MCF 10A (cell line): ENCODE measurements at regions of chr1 and their contacts with region 1.

Region 1: GRCh38 chr1:6359216-6360116 is 34.1 kb downstream of the ACOT7 start:
- DNase-seq: peak; percentile 39
- H3K4me3 Mint-ChIP-seq: no peak overlapping the region
- H3K27ac Mint-ChIP-seq: no peak overlapping the region
- H3K4me1 Mint-ChIP-seq: peaks cover 18% of the 10 kb centered on the region
- H3K27me3 Mint-ChIP-seq: no peaks in the 10 kb centered on the region
- CTCF ChIP-seq: no peak

Region 2: DNA sequence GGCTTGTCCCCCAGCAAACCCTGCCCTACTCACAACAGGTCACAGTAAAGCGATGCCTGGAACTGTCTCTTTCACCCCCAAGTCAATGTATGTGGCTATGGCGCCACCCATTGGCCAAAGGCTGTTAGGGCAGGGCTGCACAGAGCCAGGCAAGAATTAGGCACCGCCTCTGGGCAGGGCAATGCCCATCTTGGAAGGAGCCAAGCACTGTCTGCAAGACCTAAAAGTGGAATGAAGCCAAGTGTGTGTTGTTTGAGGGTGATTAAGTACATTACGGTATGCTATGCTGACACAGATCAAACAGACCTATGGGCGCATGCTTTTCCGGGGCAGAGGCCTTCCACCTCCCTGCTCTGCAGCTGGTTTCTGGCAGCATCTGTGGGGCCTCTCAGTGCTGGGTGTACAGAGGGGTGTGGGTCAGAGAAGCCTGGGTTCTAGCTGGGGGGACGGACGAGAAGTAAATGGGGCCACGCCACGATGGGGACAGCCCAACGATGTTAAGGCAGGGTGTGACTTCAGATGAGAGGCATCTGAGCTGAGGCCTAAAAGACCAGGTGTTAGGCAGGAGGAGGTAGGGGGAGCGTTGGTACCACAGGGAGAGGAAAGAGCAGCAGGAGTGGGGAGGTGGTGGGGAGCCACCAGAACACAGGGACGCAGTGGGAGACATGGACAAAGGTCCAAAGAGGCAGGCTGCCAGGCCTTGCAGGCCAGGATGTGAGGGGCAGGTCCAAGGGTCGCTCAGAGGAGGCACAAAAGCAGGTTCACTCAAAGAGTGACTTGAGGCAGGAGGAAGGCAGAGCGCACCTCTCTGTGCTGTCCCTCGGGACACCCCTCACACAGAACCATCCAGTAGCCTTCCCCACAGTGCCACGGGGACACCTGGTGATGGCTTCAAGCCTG is 15.7 kb before region 1 on chr1:
- CTCF ChIA-PET with region 1: interaction called, 19 read pairs
- POLR2A ChIA-PET with region 1: no interaction called
- intact Hi-C with region 1: no loop called
- DNase-seq: peak; percentile 98
- H3K4me3 Mint-ChIP-seq: no peak overlapping the region
- H3K27ac Mint-ChIP-seq: peak overlapping the region; percentile 68
- H3K4me1 Mint-ChIP-seq: peaks cover 15% of the 10 kb centered on the region
- H3K27me3 Mint-ChIP-seq: no peaks in the 10 kb centered on the region
- CTCF ChIP-seq: peak; percentile 93

Region 3: GRCh38 chr1:6385488-6386191 is 26.2 kb after region 1 on chr1:
- CTCF ChIA-PET with region 1: interaction called, 75 read pairs
- POLR2A ChIA-PET with region 1: interaction called, 8 read pairs
- intact Hi-C with region 1: loop called (anchors 1 kb)
- DNase-seq: peak; percentile 97
- H3K4me3 Mint-ChIP-seq: peak overlapping the region; percentile 89
- H3K27ac Mint-ChIP-seq: peak overlapping the region; percentile 81
- H3K4me1 Mint-ChIP-seq: peaks cover 25% of the 10 kb centered on the region
- H3K27me3 Mint-ChIP-seq: no peaks in the 10 kb centered on the region
- CTCF ChIP-seq: no peak

Region 4: DNA sequence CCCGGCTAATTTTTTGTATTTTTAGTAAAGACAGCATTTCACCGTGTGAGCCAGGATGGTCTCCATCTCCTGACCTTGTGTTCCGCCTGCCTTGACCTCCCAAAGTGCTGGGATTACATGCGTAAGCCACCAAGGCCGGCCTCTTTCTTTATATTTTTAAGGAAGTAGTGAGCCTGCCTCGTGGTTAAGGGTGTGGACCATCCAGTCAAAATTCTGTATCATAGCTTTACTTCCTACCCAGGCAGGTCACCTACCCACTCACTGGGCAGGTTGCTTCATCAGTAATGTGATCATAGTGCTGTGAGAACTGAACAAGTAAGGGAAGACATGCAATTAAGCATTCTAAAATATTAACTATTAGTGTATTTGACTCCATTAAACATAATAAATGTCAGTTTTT is 42.2 kb after region 1 on chr1:
- CTCF ChIA-PET with region 1: interaction called, 188 read pairs
- POLR2A ChIA-PET with region 1: interaction called, 4 read pairs
- intact Hi-C with region 1: loop called (anchors 1 kb)
- DNase-seq: no peak
- H3K4me3 Mint-ChIP-seq: no peak overlapping the region
- H3K27ac Mint-ChIP-seq: no peak overlapping the region
- H3K4me1 Mint-ChIP-seq: no peaks in the 10 kb centered on the region
- H3K27me3 Mint-ChIP-seq: no peaks in the 10 kb centered on the region
- CTCF ChIP-seq: no peak

Region 5: DNA sequence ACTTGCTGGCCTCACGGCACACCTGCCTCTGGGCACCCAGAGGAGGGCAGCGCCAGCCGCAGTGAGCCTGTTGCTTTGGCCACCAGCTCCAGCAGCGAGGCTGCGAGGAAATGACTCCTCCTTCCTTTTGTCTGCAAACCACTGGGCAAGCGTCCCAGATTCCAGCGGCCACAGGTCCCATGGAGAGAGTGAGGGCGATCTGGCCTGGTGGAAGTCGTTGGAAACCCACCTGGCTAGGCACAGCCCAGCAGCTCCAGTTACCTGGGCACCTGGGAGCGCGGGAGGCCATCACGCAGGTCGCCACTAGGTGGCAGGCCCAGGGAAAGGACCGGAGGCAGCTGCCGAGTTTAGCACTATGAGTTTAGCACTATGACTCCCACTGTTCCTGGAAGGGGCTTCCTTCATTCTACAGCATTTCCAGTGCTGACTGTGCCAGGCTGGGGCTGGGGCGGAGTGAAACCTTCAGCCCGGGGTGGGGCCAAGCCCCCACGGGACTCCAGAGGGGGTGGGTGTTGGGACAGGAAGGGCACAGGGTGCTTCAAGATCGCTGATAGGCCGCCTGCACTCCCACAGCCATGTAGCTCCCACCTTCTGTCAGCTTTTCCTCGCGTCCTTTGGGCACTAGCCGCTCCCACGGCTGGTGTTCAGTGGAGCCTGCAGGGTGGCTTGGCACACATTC is 64.0 kb after region 1 on chr1:
- CTCF ChIA-PET with region 1: interaction called, 14 read pairs
- POLR2A ChIA-PET with region 1: interaction called, 3 read pairs
- intact Hi-C with region 1: no loop called
- DNase-seq: peak; percentile 91
- H3K4me3 Mint-ChIP-seq: no peak overlapping the region
- H3K27ac Mint-ChIP-seq: no peak overlapping the region
- H3K4me1 Mint-ChIP-seq: peaks cover 25% of the 10 kb centered on the region
- H3K27me3 Mint-ChIP-seq: no peaks in the 10 kb centered on the region
- CTCF ChIP-seq: peak; percentile 66